Right lobe of liver (tissue), 6 donors: ENCODE measurements at regions of chr18 and their contacts with region 1.

Region 1: DNA sequence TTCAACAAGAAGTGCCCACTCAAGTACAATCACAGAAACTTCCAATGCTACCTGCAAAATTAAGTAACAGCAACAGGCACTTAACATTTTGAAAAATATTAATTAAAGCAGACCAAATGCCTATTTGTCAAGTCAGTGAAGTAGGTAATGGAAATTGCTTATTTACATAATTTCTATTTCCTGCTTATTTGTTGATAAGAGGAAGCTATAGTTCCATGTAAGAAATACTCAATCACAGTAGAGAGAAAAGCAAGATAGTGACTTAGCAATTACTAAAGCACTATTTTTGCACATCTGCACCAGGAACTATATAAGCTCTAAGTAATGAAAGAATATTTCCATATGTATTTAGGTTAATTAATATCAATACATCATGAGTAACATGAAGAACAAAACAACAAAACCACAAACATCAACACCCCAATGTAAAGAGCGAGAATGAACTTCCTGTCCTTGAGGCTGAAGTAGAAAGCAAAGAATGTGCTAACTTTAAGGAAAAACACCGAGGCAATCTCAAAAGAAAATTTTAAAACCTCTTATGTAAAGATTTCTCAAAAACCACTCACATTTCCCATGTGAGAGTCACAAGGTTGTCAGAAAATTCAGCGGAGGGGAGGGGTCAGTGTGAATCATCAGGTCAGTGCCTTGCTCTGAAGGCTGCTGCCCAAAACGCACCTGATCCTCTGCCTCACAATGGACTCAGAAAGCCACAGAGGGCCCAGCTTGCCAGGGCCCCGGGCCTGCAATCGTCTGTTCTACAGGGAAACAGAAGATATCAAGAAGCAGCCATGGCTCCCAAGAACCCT is 12.5 kb downstream of the NPC1 start:
- DNase-seq: peak in 1 of 3 donors; percentile 63
- ATAC-seq: peak; percentile 52 to 87 (median 70)
- H3K4me3 ChIP-seq: no peak overlapping the region
- H3K27ac ChIP-seq: peak overlapping the region in 2 of 3 donors; percentile 31 to 50
- H3K4me1 ChIP-seq: peaks cover 0 to 35% (median 6%) of the 10 kb centered on the region in 4 donors
- H3K27me3 ChIP-seq: no peaks in the 10 kb centered on the region
- CTCF ChIP-seq: no peak
- POLR2A ChIP-seq: no peak

Region 2: GRCh38 chr18:23529597-23529996 is 44.2 kb before region 1 on chr18:
- intact Hi-C with region 1: loop called in 1 of 2 experiments (anchors 10 kb)
- DNase-seq: no peak
- ATAC-seq: no peak
- H3K4me3 ChIP-seq: no peak overlapping the region
- H3K27ac ChIP-seq: peak overlapping the region in 1 of 3 donors; percentile 18
- H3K4me1 ChIP-seq: peaks cover 0 to 9% (median 0%) of the 10 kb centered on the region in 4 donors
- H3K27me3 ChIP-seq: no peaks in the 10 kb centered on the region
- CTCF ChIP-seq: no peak
- POLR2A ChIP-seq: no peak